AG04449 (cell line): ENCODE measurements at regions of chr11 and their contacts with region 1.

Region 1: DNA sequence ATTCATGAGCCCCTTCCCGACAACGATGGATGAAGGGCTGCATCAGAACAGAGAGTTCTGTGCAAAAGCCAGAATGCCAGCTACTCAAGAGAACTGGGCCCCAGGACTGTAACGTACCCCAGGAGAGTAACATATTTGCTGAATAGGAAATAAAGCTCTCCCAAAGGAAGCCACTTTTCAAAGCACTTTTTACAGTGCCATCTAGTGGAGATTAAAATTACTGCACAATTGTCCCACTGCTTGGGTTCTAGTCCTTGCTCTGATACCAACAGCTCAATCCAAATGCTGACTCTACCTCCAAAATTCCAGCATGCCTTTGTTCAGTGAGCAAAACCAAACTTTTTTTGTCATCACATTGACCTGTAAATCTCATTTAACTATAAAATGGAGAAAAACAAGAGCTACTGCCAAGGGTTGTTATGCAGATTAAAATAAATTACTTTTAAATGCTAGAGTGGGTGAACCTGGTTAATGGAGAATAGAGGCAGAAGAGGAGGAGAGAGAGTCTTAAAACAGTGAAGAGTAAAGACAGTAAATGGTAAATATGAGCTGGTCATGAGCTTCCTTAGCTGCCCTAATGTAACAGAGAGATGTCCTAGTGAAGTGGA is 87.6 kb upstream of the FSHB start:
- DNase-seq: no peak
- H3K4me3 ChIP-seq: no peak overlapping the region
- CTCF ChIP-seq: peak; percentile 55

Region 2: DNA sequence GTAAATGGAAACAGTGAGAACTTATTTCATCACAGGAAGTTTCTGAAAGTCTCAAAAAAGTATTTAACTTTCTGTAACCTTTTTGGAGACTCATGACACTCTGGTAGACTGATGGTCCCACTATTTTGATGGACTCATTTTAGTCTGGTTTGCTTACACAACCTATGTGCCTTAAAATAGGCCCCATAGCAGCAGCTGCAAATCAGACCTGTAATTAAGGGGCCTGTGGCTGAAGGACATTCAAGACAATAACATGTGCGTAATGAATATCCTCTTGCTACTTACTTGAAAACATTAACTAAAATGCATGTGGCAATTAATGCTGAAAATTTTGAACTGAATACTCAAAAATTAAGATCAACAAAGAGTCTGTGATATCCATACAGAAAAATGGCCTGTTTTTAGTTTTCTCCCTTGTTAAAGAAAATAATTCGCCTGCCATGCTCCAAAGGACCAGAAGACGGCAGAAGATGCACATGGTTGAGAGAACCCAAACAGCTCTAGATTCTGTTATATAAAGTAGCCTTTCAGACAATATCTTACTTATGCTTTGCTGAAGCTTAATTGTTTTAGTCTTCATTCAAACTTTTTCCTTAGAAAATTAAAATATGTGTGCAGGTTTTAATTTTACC is 694.8 kb before region 1 on chr11:
- CTCF ChIA-PET with region 1: interaction called, 53 read pairs
- POLR2A ChIA-PET with region 1: no interaction called
- DNase-seq: no peak
- H3K4me3 ChIP-seq: no peak overlapping the region
- CTCF ChIP-seq: peak; percentile 45

Region 3: GRCh38 chr11:30128269-30128932 is 14.8 kb before region 1 on chr11:
- CTCF ChIA-PET with region 1: interaction called, 171 read pairs
- POLR2A ChIA-PET with region 1: no interaction called
- DNase-seq: no peak
- H3K4me3 ChIP-seq: no peak overlapping the region
- CTCF ChIP-seq: peak; percentile 37

Region 4: DNA sequence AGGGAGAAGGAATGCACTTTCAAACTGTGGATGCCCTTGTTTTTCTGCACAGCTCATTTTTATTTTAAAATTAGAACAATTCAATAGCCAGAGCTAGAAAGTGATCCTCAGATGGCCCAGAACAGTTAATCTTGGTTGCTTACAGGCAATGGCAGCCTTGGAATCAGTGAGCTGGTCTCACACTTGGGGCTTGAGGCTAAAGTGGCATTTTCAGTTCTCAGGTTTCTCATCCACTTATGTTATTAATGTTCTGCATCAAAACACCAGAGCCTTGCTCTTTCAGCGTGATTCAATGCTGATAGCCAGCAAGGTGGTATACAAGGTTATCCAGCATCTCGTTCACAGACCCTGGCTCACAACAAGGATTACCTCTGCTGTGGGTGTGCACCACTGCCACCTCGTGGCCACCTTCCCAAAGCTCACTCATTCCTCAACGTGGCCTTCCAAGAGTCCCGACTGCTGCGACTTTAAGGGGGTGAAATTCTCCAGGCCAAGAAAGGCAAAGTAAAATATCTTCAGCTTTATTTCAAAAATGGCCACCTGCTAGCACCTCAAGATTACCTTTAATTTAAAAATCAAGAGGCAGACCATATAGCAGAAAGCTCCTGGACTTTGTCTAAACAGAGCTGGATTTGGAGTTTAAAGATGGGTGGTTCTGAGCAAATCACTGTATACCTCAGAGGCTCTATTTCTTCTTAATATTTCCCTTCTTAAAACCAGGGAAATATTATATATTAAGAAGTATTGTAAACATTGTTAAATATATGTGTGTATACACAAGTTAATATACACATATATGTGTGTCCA is 53.4 kb after region 1 on chr11:
- CTCF ChIA-PET with region 1: interaction called, 10 read pairs
- POLR2A ChIA-PET with region 1: no interaction called
- DNase-seq: no peak
- H3K4me3 ChIP-seq: no peak overlapping the region
- CTCF ChIP-seq: peak; percentile 81

Region 5: GRCh38 chr11:30432178-30432577 is 289.0 kb after region 1 on chr11:
- CTCF ChIA-PET with region 1: no interaction called
- POLR2A ChIA-PET with region 1: no interaction called
- DNase-seq: no peak
- H3K4me3 ChIP-seq: no peak overlapping the region
- CTCF ChIP-seq: no peak